Caco-2 (cell line): ENCODE measurements at regions of chr11 and their contacts with region 1.

Region 1: DNA sequence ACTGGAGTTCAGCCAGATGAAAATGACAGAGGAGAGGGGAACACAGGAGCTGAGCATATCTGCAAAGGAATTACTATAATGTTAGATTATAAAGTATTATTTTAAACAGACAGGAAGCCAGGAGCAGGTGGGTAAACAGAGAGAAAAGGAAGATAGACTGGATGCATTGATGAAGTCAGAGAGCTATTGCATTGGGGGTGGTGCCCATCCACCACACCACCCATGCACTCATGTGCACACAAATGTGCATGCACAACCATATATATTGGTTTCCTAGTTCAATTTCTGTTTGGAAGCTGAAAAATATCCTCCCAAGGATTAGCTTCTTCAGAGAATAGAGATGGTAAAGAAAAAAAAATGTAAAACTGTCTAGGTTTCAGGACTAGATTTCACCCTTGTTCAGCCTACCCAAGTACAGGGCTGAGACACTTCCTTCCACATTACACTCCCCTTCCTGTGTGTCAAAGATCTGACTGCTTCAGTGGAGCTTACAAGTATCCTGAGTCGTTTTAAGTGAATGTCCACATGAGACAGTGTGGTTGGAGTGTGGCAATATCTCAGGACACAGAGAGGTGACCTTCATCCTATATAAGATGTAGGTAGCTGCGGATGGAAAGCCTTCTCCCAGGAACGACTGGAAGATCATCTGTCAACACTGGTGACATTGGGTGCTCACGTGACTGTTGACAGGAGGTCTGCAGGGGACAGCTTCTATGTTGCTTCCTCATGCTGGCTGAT is 12.2 kb upstream of the SMPD1 start:
- DNase-seq: no peak
- H3K4me3 ChIP-seq: no peak overlapping the region
- H3K4me3 Mint-ChIP-seq: no peak overlapping the region
- H3K27ac Mint-ChIP-seq: no peak overlapping the region
- H3K4me1 ChIP-seq: peaks cover 8% of the 10 kb centered on the region
- H3K4me1 Mint-ChIP-seq: peaks cover 7% of the 10 kb centered on the region
- H3K27me3 ChIP-seq: no peaks in the 10 kb centered on the region
- H3K27me3 Mint-ChIP-seq: no peaks in the 10 kb centered on the region
- CTCF ChIP-seq: no peak

Region 2: GRCh38 chr11:5280582-5281102 is 1097.4 kb before region 1 on chr11:
- CTCF ChIA-PET with region 1: no interaction called
- POLR2A ChIA-PET with region 1: no interaction called
- intact Hi-C with region 1: no loop called
- DNase-seq: peak; percentile 29 to 59
- H3K4me3 ChIP-seq: no peak overlapping the region
- H3K4me3 Mint-ChIP-seq: no peak overlapping the region
- H3K27ac Mint-ChIP-seq: peak overlapping the region; percentile 34
- H3K4me1 ChIP-seq: no peaks in the 10 kb centered on the region
- H3K4me1 Mint-ChIP-seq: peaks cover 6% of the 10 kb centered on the region
- H3K27me3 ChIP-seq: no peaks in the 10 kb centered on the region
- H3K27me3 Mint-ChIP-seq: no peaks in the 10 kb centered on the region
- CTCF ChIP-seq: no peak

Region 3: DNA sequence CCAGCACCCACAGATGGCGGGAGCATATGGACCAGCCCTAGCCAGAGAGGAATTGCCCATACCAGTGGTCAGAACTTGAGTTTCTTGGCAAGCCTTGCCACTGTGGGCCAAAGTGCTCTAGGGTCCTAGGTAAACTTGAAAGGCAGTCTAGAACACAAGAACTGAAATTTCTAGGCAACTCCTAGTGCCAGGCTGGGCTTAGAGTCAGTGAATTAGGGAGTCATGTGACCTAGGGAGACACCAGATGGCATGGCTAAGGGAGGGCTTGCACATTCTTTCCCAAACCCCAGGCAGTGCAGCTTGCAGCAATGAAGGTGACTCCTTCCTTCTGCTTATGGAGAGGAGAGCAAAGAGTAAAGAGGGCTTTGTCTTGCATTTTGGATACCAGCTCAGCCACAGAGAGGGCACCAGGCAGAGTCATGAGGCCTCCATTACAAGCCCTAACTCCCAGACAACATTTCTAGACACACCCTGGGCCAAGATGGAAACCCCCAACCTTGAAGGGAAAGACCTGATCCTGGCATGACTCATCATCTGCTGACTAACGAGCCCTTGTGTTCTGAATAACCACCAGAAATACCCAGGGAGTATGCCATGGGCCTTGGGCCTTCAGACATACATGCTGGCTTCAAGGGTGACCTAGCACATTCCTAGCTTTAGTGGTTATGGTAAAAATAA is 455.2 kb before region 1 on chr11:
- CTCF ChIA-PET with region 1: no interaction called
- POLR2A ChIA-PET with region 1: no interaction called
- intact Hi-C with region 1: no loop called
- DNase-seq: no peak
- H3K4me3 ChIP-seq: no peak overlapping the region
- H3K4me3 Mint-ChIP-seq: no peak overlapping the region
- H3K27ac Mint-ChIP-seq: no peak overlapping the region
- H3K4me1 ChIP-seq: no peaks in the 10 kb centered on the region
- H3K4me1 Mint-ChIP-seq: no peaks in the 10 kb centered on the region
- H3K27me3 ChIP-seq: no peaks in the 10 kb centered on the region
- H3K27me3 Mint-ChIP-seq: peaks cover 8% of the 10 kb centered on the region
- CTCF ChIP-seq: no peak

Region 4: GRCh38 chr11:6389921-6390724 is 12.1 kb after region 1 on chr11 and contains the start of gene SMPD1:
- CTCF ChIA-PET with region 1: interaction called, 27 read pairs
- POLR2A ChIA-PET with region 1: interaction called, 5 read pairs
- intact Hi-C with region 1: no loop called
- DNase-seq: peak; percentile 92 to 93
- H3K4me3 ChIP-seq: peak within 1 kb of the TSS; percentile 80
- H3K4me3 Mint-ChIP-seq: peak within 1 kb of the TSS; percentile 68
- H3K27ac Mint-ChIP-seq: peak within 1 kb of the TSS; percentile 27
- H3K4me1 ChIP-seq: peaks cover 24% of the 10 kb centered on the region
- H3K4me1 Mint-ChIP-seq: peaks cover 33% of the 10 kb centered on the region
- H3K27me3 ChIP-seq: no peaks in the 10 kb centered on the region
- H3K27me3 Mint-ChIP-seq: no peaks in the 10 kb centered on the region
- CTCF ChIP-seq: no peak
- total RNA-seq, gene SMPD1: 38.6 and 41.9 TPM in 2 replicates

Region 5: GRCh38 chr11:6431861-6432260 is 53.8 kb after region 1 on chr11:
- CTCF ChIA-PET with region 1: interaction called, 14 read pairs
- POLR2A ChIA-PET with region 1: no interaction called
- intact Hi-C with region 1: no loop called
- DNase-seq: no peak
- H3K4me3 ChIP-seq: no peak overlapping the region
- H3K4me3 Mint-ChIP-seq: no peak overlapping the region
- H3K27ac Mint-ChIP-seq: no peak overlapping the region
- H3K4me1 ChIP-seq: peaks cover 20% of the 10 kb centered on the region
- H3K4me1 Mint-ChIP-seq: peaks cover 31% of the 10 kb centered on the region
- H3K27me3 ChIP-seq: no peaks in the 10 kb centered on the region
- H3K27me3 Mint-ChIP-seq: no peaks in the 10 kb centered on the region
- CTCF ChIP-seq: no peak

Region 6: DNA sequence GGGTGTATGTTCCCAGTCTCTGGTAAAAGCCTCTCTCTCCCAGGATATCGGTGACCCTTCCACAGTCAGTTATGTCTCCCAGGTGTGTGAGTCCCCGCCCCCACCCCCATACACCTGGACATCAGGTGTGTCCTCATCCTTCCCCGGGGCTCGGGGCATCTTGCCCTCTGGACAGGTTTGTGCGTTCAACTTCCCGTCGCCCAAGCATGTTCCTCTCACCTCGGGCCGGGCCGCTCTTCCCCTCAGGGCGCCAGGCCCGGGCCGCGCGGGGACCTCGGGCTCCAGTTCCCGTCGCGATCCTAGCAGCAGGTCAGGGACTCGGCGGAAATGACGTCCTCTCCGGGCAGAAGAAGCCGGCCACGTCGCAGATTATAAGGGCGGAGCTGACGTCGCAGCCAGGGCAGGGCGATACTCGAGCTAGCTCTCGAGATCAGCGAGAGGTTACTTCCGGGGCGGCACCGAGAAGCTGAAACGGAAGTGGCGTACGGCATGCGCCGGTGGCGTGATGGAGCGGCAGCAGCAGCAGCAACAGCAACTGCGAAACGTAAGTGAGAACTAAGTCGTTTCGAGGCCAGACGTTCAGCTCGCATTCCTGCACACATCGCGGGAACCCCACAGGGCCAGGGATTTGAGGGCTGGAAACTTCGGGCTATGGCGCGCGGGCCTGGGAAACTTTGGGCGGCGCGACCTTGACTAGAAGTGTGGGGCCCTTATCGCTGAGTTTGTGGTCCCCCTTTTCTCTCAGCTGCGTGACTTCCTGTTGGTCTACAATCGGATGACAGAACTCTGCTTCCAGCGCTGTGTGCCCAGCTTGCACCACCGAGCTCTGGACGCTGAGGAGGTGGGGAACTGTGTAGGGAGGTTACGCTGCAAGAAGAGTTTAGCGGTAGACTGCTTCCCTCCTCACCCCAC is 103.2 kb after region 1 on chr11 and contains the starts of genes ARFIP2 and TIMM10B:
- CTCF ChIA-PET with region 1: interaction called, 15 read pairs
- POLR2A ChIA-PET with region 1: interaction called, 11 read pairs
- intact Hi-C with region 1: no loop called
- DNase-seq: peak; percentile 97 to 98
- H3K4me3 ChIP-seq: peak within 1 kb of the TSS; percentile 88
- H3K4me3 Mint-ChIP-seq: peak within 1 kb of the TSS; percentile 97
- H3K27ac Mint-ChIP-seq: peak within 1 kb of the TSS; percentile 99
- H3K4me1 ChIP-seq: peaks cover 42% of the 10 kb centered on the region
- H3K4me1 Mint-ChIP-seq: peaks cover 23% of the 10 kb centered on the region
- H3K27me3 ChIP-seq: no peaks in the 10 kb centered on the region
- H3K27me3 Mint-ChIP-seq: no peaks in the 10 kb centered on the region
- CTCF ChIP-seq: no peak
- total RNA-seq, gene ARFIP2: 94.6 and 100 TPM in 2 replicates
- total RNA-seq, gene TIMM10B: 52.4 and 53.1 TPM in 2 replicates

Region 7: DNA sequence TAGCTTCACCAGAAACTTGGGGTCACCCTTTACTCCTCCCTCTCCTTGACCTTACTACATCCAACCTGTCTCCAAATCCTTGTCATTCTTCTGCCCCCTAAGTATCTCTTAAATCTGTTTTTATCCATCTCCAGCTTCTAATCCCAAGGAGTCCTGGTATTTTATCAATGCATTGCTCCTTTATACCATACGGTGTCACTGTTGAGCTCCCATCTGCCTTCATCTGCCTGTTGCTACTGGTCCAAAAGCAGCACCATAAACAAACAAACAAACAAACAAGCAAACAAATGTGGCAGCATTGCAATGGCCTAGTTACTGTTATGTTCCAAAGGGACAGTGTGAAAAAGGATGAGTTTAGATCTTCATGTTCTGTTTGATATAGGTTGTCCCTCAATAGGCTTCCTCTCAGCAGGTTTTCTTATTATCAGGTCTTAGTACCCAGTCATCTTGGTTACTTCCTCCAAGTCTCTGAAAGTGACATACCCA is 153.2 kb after region 1 on chr11:
- CTCF ChIA-PET with region 1: interaction called, 16 read pairs
- POLR2A ChIA-PET with region 1: no interaction called
- intact Hi-C with region 1: no loop called
- DNase-seq: peak in 1 of 2 experiments; percentile 55
- H3K4me3 ChIP-seq: no peak overlapping the region
- H3K4me3 Mint-ChIP-seq: no peak overlapping the region
- H3K27ac Mint-ChIP-seq: no peak overlapping the region
- H3K4me1 ChIP-seq: peaks cover 4% of the 10 kb centered on the region; the same call in 1 of the 2 replicates
- H3K4me1 Mint-ChIP-seq: peaks cover 6% of the 10 kb centered on the region
- H3K27me3 ChIP-seq: no peaks in the 10 kb centered on the region
- H3K27me3 Mint-ChIP-seq: no peaks in the 10 kb centered on the region
- CTCF ChIP-seq: peak; percentile 74 to 80

Region 8: GRCh38 chr11:6682936-6683861 is 305.1 kb after region 1 on chr11 and contains the start of gene MRPL17:
- CTCF ChIA-PET with region 1: interaction called, 31 read pairs
- POLR2A ChIA-PET with region 1: no interaction called
- intact Hi-C with region 1: loop called (anchors 1 kb)
- DNase-seq: peak; percentile 99
- H3K4me3 ChIP-seq: peak within 1 kb of the TSS; percentile 88
- H3K4me3 Mint-ChIP-seq: peak within 1 kb of the TSS; percentile 100
- H3K27ac Mint-ChIP-seq: peak within 1 kb of the TSS; percentile 100
- H3K4me1 ChIP-seq: peaks cover 13% of the 10 kb centered on the region
- H3K4me1 Mint-ChIP-seq: peaks cover 7% of the 10 kb centered on the region
- H3K27me3 ChIP-seq: no peaks in the 10 kb centered on the region
- H3K27me3 Mint-ChIP-seq: peaks cover 5% of the 10 kb centered on the region
- CTCF ChIP-seq: peak; percentile 89 to 91
- total RNA-seq, gene MRPL17: 57.8 and 60.8 TPM in 2 replicates